OCI-LY7 (cell line): ENCODE measurements at regions of chr2 and their contacts with region 1.

Region 1: DNA sequence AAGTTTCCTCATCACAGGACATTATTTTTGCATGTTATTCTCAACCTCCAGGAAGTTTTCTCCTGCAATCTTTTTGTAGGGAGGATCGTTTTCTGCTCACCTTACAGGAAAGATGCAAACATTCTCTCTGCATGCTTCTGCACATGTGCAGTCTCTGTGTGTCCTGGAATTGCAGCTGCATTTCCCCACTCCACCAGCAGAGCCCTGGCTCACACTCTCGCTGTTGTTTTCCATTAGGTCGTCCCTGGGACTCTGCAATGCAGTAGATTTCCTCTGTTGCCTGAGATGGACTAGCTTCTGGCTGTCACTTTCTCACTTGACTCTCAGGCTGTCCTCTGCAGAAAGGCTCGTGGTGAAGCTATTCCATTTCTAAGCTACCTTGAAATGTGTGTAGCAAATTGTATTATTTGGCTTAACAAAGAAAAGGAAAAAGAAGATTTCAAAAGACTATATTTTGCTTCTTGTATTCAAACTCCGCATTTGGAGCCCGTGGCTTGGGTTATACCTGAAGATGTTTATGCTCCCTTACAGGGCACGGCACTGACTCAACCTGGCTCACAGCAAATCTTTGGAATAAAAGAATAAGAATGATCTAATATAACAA is 346.7 kb downstream of the RAD51AP2 start:
- DNase-seq: peak; percentile 19
- H3K4me3 ChIP-seq: no peak overlapping the region
- H3K27ac ChIP-seq: no peak overlapping the region
- H3K4me1 ChIP-seq: no peaks in the 10 kb centered on the region
- CTCF ChIP-seq: peak; percentile 65

Region 2: DNA sequence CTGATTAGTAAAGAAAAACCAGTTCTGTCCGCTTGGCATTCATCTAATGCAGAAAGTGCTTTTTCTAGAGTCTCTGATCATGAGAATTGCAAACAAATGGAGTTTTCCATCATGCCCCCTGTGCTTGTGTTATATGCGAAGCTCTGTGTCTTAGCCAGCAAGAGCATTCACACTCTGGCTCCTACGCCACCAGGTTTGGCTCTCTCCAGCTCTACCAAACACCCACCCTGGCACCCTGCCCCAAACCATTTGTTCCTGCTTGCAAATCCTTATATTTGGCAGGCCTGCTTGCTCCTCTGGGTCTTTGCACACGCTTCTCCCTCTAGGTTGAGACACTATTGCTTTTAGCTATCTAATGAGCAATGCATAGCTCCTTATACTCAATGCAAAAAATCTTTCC is 301.8 kb before region 1 on chr2:
- CTCF ChIA-PET with region 1: no interaction called
- POLR2A ChIA-PET with region 1: no interaction called
- intact Hi-C with region 1: no loop called
- DNase-seq: no peak
- H3K4me3 ChIP-seq: no peak overlapping the region
- H3K27ac ChIP-seq: no peak overlapping the region
- H3K4me1 ChIP-seq: no peaks in the 10 kb centered on the region
- CTCF ChIP-seq: no peak

Region 3: GRCh38 chr2:16925145-16925544 is 246.4 kb before region 1 on chr2:
- CTCF ChIA-PET with region 1: no interaction called
- POLR2A ChIA-PET with region 1: no interaction called
- intact Hi-C with region 1: no loop called
- DNase-seq: no peak
- H3K4me3 ChIP-seq: no peak overlapping the region
- H3K27ac ChIP-seq: no peak overlapping the region
- H3K4me1 ChIP-seq: no peaks in the 10 kb centered on the region
- CTCF ChIP-seq: no peak

Region 4: GRCh38 chr2:17035010-17035409 is 136.5 kb before region 1 on chr2:
- CTCF ChIA-PET with region 1: no interaction called
- POLR2A ChIA-PET with region 1: no interaction called
- intact Hi-C with region 1: no loop called
- DNase-seq: no peak
- H3K4me3 ChIP-seq: no peak overlapping the region
- H3K27ac ChIP-seq: no peak overlapping the region
- H3K4me1 ChIP-seq: no peaks in the 10 kb centered on the region
- CTCF ChIP-seq: no peak

Region 5: GRCh38 chr2:17125989-17126620 is 45.4 kb before region 1 on chr2:
- CTCF ChIA-PET with region 1: no interaction called
- POLR2A ChIA-PET with region 1: no interaction called
- intact Hi-C with region 1: loop called (anchors 1 kb)
- DNase-seq: no peak
- H3K4me3 ChIP-seq: no peak overlapping the region
- H3K27ac ChIP-seq: no peak overlapping the region
- H3K4me1 ChIP-seq: peaks cover 21% of the 10 kb centered on the region
- CTCF ChIP-seq: no peak

Region 6: GRCh38 chr2:17184512-17184911 is 13.0 kb after region 1 on chr2:
- CTCF ChIA-PET with region 1: interaction called, 3 read pairs
- POLR2A ChIA-PET with region 1: interaction called, 13 read pairs
- intact Hi-C with region 1: no loop called
- DNase-seq: no peak
- H3K4me3 ChIP-seq: no peak overlapping the region
- H3K27ac ChIP-seq: no peak overlapping the region
- H3K4me1 ChIP-seq: no peaks in the 10 kb centered on the region
- CTCF ChIP-seq: no peak

Region 7: GRCh38 chr2:17429130-17429529 is 257.6 kb after region 1 on chr2:
- CTCF ChIA-PET with region 1: no interaction called
- POLR2A ChIA-PET with region 1: no interaction called
- intact Hi-C with region 1: no loop called
- DNase-seq: no peak
- H3K4me3 ChIP-seq: no peak overlapping the region
- H3K27ac ChIP-seq: no peak overlapping the region
- H3K4me1 ChIP-seq: no peaks in the 10 kb centered on the region
- CTCF ChIP-seq: no peak